ENCODE measurements at regions of chr1 and their contacts with region 1.

Region 1: GRCh38 chr1:245041058-245041698 is 113.6 kb upstream of the KIF26B start:
- DNase-seq: no peak
- H3K4me3 ChIP-seq: no peak overlapping the region
- H3K27ac ChIP-seq: no peak overlapping the region
- H3K4me1 ChIP-seq: peaks cover 0 to 12% (median 3%) of the 10 kb centered on the region in 6 donors
- H3K27me3 ChIP-seq: no peaks in the 10 kb centered on the region
- CTCF ChIP-seq: no peak
- POLR2A ChIP-seq: no peak

Region 2: DNA sequence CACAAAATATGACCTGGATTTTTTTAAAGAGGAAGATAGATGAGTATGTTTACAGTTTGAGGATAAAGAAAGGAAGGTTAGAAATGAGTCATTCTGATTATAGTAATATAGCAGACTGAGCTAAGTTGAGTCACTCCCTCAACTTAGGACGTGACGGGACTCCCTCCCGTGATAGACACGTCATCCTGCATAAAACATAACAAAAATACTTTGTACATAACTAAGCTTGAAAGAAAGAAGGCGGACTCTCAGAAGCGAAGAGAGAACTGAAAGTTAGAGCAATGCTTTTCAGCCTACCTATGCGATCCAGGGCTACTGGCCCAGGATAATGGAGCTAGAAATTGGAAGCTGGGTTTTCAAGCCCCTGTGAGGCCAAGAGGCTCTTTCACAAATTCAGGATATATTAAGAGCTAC is 441.2 kb before region 1 on chr1:
- intact Hi-C with region 1: loop called (anchors 5 kb)
- DNase-seq: no peak
- H3K4me3 ChIP-seq: no peak overlapping the region
- H3K27ac ChIP-seq: no peak overlapping the region
- H3K4me1 ChIP-seq: no peaks in the 10 kb centered on the region
- H3K27me3 ChIP-seq: peaks cover 0 to 14% (median 0%) of the 10 kb centered on the region in 7 donors
- CTCF ChIP-seq: no peak
- POLR2A ChIP-seq: no peak

Region 3: DNA sequence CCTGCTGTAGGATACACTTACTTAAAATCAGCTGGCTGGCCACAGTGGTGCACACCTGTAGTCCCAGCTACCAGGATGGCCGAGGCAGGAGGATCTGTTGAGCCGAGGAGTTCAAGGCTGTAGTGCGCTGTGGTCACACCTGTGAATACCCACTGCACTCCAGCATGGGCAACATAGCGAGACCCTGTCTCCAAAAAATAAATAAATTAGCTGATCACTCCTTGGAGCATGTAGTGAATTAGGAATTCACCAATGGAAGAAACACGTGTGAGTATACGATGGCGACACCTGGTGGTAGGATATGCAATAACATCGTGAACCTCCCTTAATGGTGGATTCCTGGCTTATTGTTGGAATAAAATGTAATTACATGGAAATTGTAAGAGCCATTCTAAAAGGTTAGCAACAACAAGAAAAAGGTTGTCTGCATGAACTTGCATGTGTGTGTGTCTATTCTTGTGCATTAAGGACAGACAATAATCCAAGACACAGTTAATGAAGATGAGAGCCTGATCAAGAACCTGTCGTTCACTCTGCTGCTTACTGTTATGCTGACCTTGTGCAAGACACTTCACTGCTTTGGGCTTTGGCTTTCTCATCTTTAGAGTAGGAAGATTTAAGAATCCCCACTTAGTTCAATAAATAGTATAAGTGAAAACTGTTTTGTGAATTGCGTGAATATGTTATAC is 244.3 kb before region 1 on chr1:
- intact Hi-C with region 1: loop called (anchors 5 kb)
- DNase-seq: no peak
- H3K4me3 ChIP-seq: no peak overlapping the region
- H3K27ac ChIP-seq: no peak overlapping the region
- H3K4me1 ChIP-seq: peaks cover 0 to 13% (median 5%) of the 10 kb centered on the region in 6 donors
- H3K27me3 ChIP-seq: peaks cover 0 to 22% (median 0%) of the 10 kb centered on the region in 7 donors
- CTCF ChIP-seq: peak; percentile 78 to 93 (median 89)
- POLR2A ChIP-seq: no peak

Region 4: GRCh38 chr1:244980605-244981004 is 60.6 kb before region 1 on chr1:
- intact Hi-C with region 1: no loop called
- DNase-seq: no peak
- H3K4me3 ChIP-seq: no peak overlapping the region
- H3K27ac ChIP-seq: no peak overlapping the region
- H3K4me1 ChIP-seq: no peaks in the 10 kb centered on the region
- H3K27me3 ChIP-seq: no peaks in the 10 kb centered on the region
- CTCF ChIP-seq: no peak
- POLR2A ChIP-seq: no peak